ENCODE measurements at regions of chr1 and their contacts with region 1.

Region 1: GRCh38 chr1:93666613-93667384 is 14.8 kb downstream of the BCAR3 start:
- DNase-seq: peak; percentile 89
- H3K4me3 ChIP-seq: no peak overlapping the region
- H3K27ac ChIP-seq: peak overlapping the region in 3 of 4 donors; percentile 78 to 86 (median 80)
- H3K4me1 ChIP-seq: peaks cover 0 to 100% (median 96%) of the 10 kb centered on the region in 4 donors
- H3K27me3 ChIP-seq: no peaks in the 10 kb centered on the region
- CTCF ChIP-seq: no peak
- EP300 ChIP-seq: peak; percentile 90 to 98 (median 94)
- POLR2A ChIP-seq: no peak

Region 2: DNA sequence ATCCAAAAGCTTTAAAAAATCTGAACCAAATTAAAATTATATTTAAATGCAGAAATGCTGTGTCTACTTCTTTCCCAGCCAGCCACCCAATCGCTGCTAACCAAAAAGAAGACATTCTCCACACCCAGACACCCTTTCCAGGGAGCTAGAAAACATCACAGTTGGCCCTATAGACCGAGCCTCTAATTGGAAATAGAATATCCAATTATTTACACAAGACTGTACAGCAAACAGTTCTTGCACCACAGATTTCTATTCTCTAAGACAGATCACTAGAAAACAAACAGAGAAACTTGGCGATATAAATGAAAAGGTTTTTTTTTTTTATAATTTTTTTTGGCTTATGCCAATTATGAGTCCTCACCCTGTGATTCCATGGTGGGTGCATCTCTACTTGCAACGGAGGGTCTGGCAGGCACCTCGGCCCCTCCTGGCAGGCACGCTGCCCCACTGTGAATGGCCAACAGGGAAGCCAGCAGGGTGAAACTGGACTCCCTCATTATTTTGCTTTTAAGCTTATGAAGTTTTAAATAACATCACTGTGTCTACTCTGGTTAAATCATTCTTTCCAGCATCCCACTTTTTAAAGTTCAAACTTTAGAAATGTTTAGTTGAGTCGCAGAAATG is 14.4 kb before region 1 on chr1:
- intact Hi-C with region 1: no loop called
- DNase-seq: no peak
- H3K4me3 ChIP-seq: no peak overlapping the region
- H3K27ac ChIP-seq: no peak overlapping the region
- H3K4me1 ChIP-seq: peaks cover 0 to 4% (median 0%) of the 10 kb centered on the region in 4 donors
- H3K27me3 ChIP-seq: no peaks in the 10 kb centered on the region
- CTCF ChIP-seq: no peak
- EP300 ChIP-seq: no peak
- POLR2A ChIP-seq: no peak

Region 3: DNA sequence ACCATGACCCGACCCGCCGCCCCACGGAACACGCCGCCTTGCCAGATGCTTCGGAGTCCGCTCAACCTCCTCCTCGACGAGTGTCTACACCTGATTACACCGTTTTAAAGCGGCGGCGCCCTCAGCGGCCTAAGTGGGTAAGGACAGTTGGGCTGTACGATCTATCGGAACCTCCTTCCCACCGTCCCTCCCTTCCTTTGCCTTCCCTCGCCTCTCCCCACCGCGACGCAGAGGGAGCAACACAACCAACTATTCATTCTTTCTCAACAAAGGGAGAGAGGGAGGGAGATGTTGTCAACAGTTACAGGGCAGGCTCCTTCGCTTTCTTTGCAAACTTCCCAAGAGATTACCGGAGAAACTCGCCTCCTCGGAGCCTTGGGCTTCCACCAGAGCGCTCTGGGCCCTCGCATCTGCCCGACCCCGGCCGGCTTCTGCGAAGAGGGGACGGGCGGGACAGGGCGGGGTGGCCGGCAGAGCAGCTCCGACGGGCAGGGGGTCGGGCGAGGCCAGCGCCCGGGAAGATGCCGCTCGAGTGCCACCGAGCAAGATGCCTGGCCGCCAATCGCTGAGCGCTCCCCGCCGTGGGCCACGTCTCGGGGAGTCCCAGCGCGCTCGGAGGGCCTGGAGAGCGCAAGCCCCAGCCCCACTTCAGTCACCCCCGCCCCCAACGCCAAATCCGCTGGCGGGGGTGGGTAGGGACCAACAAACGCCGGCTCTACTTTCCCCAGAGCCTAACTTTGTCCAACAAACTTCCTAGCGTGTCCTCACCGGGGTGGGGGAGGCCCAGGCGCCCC is 14.2 kb after region 1 on chr1:
- intact Hi-C with region 1: loop called (anchors 2 kb)
- DNase-seq: peak; percentile 91
- H3K4me3 ChIP-seq: peak overlapping the region; percentile 81 to 90 (median 88)
- H3K27ac ChIP-seq: peak overlapping the region; percentile 80 to 93 (median 90)
- H3K4me1 ChIP-seq: peaks cover 0 to 30% (median 11%) of the 10 kb centered on the region in 4 donors
- H3K27me3 ChIP-seq: no peaks in the 10 kb centered on the region
- CTCF ChIP-seq: peak; percentile 25 to 78 (median 68)
- EP300 ChIP-seq: no peak
- POLR2A ChIP-seq: peak in 1 of 2 donors; percentile 19